ENCODE measurements at regions of chr1 and their contacts with region 1.

Region 1: DNA sequence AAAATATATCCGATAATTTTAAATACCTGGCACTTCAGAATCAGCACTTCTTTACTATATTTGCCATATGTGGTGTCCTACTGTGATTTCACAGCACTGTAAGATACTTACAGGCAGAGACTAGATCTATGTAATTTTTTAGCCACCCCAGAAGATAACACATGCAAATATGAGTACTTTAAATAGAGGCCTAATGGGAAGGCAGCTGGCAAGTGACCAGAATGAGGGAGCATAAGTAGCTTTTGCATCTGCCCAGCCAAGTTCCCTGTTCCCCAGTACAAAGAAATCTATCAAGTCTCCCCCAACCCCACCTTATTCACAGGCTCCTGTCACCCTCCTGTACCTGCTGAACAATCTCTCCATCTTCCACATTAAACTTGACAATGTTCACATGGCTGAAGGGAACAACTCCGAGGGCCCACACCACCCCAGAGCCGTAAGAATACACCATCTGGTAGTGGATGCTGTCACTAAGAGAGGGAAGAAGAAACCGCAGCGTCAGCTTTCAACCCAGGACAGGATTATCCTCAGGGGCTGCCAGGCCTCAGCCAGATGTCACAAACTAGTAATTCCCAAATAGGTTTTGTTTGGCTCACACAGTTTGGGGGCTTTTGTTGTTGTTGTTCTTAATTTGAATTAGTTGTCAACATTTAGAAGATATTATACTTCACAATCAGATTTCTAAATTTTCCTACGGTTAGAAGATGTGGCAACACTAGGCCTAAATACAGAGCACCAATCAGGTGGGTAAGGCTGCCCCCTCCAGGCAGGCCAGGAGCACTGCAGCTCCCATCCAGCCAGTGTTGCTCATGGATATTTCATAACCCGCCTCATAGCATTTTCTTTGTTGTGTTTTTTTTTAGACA is 10.4 kb downstream of the EMC1 start:
- DNase-seq: peak; percentile 48 to 81
- ATAC-seq: peak; percentile 91 to 95
- H3K4me3 ChIP-seq: no peak overlapping the region
- H3K27ac ChIP-seq: peak overlapping the region; percentile 69 to 83 (median 78)
- H3K4me1 ChIP-seq: peaks cover 17 to 24% of the 10 kb centered on the region in 2 donors
- H3K27me3 ChIP-seq: no peaks in the 10 kb centered on the region
- CTCF ChIP-seq: peak; percentile 91 to 96 (median 94)
- POLR2A ChIP-seq: no peak

Region 2: DNA sequence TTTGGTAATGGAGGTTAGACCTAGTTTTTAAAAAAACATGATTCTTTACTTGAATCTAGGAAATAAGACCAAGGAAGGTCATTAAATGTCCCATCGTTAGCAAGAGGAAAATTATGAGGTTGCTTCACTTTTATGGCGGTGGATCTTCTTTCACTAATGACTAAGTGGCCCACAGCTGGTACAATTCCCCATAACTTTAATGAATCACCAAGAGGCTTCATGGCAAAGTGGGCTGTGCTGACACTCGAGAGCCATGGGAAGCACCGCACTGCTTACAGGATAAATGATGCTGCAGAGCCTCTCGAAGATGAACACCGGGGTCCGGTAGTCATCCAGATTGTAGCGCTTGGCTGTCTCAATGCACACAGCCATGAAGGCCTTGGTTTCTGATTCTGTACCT is 139.7 kb before region 1 on chr1:
- in situ Hi-C with region 1: no loop called
- intact Hi-C with region 1: loop called (anchors 10 kb)
- DNase-seq: no peak
- ATAC-seq: peak; percentile 73
- H3K4me3 ChIP-seq: no peak overlapping the region
- H3K27ac ChIP-seq: peak overlapping the region in 3 of 4 donors; percentile 16 to 43 (median 32)
- H3K4me1 ChIP-seq: peaks cover 0 to under 1% of the 10 kb centered on the region in 2 donors
- H3K27me3 ChIP-seq: no peaks in the 10 kb centered on the region
- CTCF ChIP-seq: no peak
- POLR2A ChIP-seq: no peak

Region 3: GRCh38 chr1:19203440-19203839 is 37.5 kb before region 1 on chr1:
- in situ Hi-C with region 1: loop called in 2 of 4 experiments (anchors 5 kb)
- intact Hi-C with region 1: loop called (anchors 1 kb)
- DNase-seq: peak; percentile 79 to 81
- ATAC-seq: peak; percentile 99 to 100
- H3K4me3 ChIP-seq: no peak overlapping the region
- H3K27ac ChIP-seq: peak overlapping the region; percentile 60 to 83 (median 76)
- H3K4me1 ChIP-seq: peaks cover 59 to 62% of the 10 kb centered on the region in 2 donors
- H3K27me3 ChIP-seq: no peaks in the 10 kb centered on the region
- CTCF ChIP-seq: no peak
- POLR2A ChIP-seq: no peak

Region 4: GRCh38 chr1:19209990-19210771 is 30.7 kb before region 1 on chr1 and contains the start of gene UBR4:
- in situ Hi-C with region 1: no loop called
- intact Hi-C with region 1: loop called (anchors 2 kb)
- DNase-seq: peak; percentile 91 to 94
- ATAC-seq: peak; percentile 92 to 95
- H3K4me3 ChIP-seq: peak within 1 kb of the TSS; percentile 84 to 92 (median 88)
- H3K27ac ChIP-seq: peak within 1 kb of the TSS; percentile 93 to 97 (median 95)
- H3K4me1 ChIP-seq: peaks cover 64 to 74% of the 10 kb centered on the region in 2 donors
- H3K27me3 ChIP-seq: no peaks in the 10 kb centered on the region
- CTCF ChIP-seq: peak in 1 of 5 experiments; percentile 3
- POLR2A ChIP-seq: peak; percentile 97 to 98
- total RNA-seq, gene UBR4: 156 to 293 (median 197) TPM

Region 5: GRCh38 chr1:19219451-19219850 is 21.5 kb before region 1 on chr1:
- in situ Hi-C with region 1: no loop called
- intact Hi-C with region 1: loop called (anchors 2 kb)
- DNase-seq: peak; percentile 27 to 53
- ATAC-seq: peak; percentile 77 to 84
- H3K4me3 ChIP-seq: no peak overlapping the region
- H3K27ac ChIP-seq: peak overlapping the region; percentile 69 to 76 (median 72)
- H3K4me1 ChIP-seq: peaks cover 46 to 62% of the 10 kb centered on the region in 2 donors
- H3K27me3 ChIP-seq: no peaks in the 10 kb centered on the region
- CTCF ChIP-seq: no peak
- POLR2A ChIP-seq: no peak